ENCODE measurements at regions of chr2 and their contacts with region 1.

Region 1: DNA sequence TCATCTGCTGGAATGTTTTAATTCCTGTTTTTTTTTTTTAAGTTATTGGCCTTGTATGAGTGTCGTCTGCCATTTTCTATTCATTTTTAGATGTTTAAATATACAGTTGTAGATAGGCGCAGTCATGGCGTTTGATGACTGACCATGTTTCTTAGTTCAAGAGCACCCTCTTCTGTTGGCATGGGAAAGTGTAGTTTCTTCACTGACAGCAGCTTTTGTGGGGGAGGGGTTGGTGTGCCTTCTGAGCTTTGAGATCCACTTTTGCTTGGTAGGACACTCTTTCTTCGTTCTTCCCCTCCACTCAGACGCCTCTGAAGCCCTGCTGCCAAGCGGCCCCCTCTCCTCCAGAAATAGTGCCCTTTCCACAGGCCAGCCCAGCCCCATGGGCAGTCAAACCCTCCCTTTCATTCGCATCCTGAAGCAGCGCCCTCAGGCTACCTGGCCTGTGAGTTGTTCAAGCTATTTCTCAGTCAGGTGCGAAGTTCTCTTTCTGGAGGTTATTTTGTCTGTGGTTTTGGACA is 492.0 kb downstream of the TNS1 start:
- DNase-seq: peak; percentile 79
- H3K4me3 Mint-ChIP-seq: no peak overlapping the region
- H3K27ac Mint-ChIP-seq: peak overlapping the region; percentile 52
- H3K4me1 Mint-ChIP-seq: no peaks in the 10 kb centered on the region
- H3K27me3 Mint-ChIP-seq: no peaks in the 10 kb centered on the region
- CTCF ChIP-seq: peak; percentile 80

Region 2: DNA sequence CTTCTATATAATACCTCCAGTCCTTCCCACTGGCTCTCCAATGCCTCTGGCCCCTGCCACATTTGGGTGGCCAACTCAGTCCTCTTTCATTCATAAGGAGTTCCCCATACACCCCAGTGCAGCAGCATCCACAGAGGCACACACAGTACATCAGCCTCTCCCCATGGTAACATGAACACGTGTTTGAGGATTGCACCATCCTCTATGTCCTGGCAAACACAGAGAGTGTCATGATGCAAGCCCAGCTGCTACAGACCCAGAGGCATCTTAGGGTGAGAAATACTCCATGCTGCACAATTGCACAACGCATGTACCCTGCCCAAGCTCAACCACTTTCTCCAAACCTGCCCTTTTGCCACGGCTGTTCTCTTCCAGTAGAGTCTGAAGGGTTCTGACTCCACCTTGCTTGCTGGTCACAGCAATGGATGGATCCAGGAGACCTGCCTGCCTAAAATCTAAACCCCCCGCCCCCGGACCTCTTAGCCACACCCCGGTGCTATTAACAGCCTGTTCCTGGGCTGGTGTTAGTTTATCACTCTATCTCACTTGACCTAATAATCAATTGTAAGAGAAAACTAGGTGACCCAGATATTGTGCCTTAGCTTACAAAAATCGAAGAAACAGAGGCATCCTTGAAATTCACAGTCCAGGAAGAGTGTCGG is 826.9 kb before region 1 on chr2:
- CTCF ChIA-PET with region 1: interaction called, 24 read pairs
- POLR2A ChIA-PET with region 1: interaction called, 3 read pairs
- intact Hi-C with region 1: loop called (anchors 1 kb)
- DNase-seq: peak; percentile 99
- H3K4me3 Mint-ChIP-seq: no peak overlapping the region
- H3K27ac Mint-ChIP-seq: peak overlapping the region; percentile 93
- H3K4me1 Mint-ChIP-seq: peaks cover 32% of the 10 kb centered on the region
- H3K27me3 Mint-ChIP-seq: no peaks in the 10 kb centered on the region
- CTCF ChIP-seq: no peak

Region 3: DNA sequence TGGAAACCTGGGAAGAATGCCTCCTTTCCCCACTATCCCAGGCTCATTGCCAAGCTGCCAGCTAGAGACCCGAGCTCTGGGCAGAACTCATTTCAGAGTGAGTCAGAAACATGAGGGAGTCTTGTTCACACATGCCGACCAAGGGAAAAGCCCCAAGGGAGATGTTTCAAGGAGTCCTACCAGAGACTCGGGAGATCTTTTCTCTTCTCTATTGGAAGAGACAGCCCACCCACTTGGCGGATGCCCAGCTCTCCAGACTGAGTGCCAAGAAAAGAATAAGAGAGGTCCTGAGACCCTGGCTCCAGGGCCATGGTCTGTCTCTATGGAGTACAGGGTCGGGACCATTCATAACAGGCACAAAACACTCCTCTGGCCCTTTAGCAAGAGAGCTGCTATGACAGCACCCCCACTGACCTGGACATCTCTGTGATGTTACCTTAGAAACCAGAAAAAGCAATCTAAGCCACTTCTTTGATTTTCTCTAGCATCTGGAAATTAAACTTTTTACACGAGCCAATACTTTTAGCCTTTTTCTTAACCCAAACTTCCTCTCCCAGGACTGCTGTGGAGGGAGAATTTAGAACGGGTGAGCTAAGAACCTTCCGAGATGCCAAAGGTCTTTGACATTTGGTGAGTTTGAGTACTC is 797.0 kb before region 1 on chr2:
- CTCF ChIA-PET with region 1: interaction called, 10 read pairs
- POLR2A ChIA-PET with region 1: no interaction called
- intact Hi-C with region 1: no loop called
- DNase-seq: peak; percentile 98
- H3K4me3 Mint-ChIP-seq: no peak overlapping the region
- H3K27ac Mint-ChIP-seq: peak overlapping the region; percentile 55
- H3K4me1 Mint-ChIP-seq: peaks cover 28% of the 10 kb centered on the region
- H3K27me3 Mint-ChIP-seq: no peaks in the 10 kb centered on the region
- CTCF ChIP-seq: no peak

Region 4: GRCh38 chr2:216989340-216990129 is 521.3 kb before region 1 on chr2:
- CTCF ChIA-PET with region 1: no interaction called
- POLR2A ChIA-PET with region 1: no interaction called
- intact Hi-C with region 1: loop called (anchors 10 kb)
- DNase-seq: no peak
- H3K4me3 Mint-ChIP-seq: no peak overlapping the region
- H3K27ac Mint-ChIP-seq: no peak overlapping the region
- H3K4me1 Mint-ChIP-seq: no peaks in the 10 kb centered on the region
- H3K27me3 Mint-ChIP-seq: peaks cover 27% of the 10 kb centered on the region
- CTCF ChIP-seq: no peak

Region 5: GRCh38 chr2:217045700-217046475 is 464.9 kb before region 1 on chr2:
- CTCF ChIA-PET with region 1: no interaction called
- POLR2A ChIA-PET with region 1: no interaction called
- intact Hi-C with region 1: no loop called
- DNase-seq: no peak
- H3K4me3 Mint-ChIP-seq: no peak overlapping the region
- H3K27ac Mint-ChIP-seq: no peak overlapping the region
- H3K4me1 Mint-ChIP-seq: no peaks in the 10 kb centered on the region
- H3K27me3 Mint-ChIP-seq: peaks cover 17% of the 10 kb centered on the region
- CTCF ChIP-seq: no peak

Region 6: DNA sequence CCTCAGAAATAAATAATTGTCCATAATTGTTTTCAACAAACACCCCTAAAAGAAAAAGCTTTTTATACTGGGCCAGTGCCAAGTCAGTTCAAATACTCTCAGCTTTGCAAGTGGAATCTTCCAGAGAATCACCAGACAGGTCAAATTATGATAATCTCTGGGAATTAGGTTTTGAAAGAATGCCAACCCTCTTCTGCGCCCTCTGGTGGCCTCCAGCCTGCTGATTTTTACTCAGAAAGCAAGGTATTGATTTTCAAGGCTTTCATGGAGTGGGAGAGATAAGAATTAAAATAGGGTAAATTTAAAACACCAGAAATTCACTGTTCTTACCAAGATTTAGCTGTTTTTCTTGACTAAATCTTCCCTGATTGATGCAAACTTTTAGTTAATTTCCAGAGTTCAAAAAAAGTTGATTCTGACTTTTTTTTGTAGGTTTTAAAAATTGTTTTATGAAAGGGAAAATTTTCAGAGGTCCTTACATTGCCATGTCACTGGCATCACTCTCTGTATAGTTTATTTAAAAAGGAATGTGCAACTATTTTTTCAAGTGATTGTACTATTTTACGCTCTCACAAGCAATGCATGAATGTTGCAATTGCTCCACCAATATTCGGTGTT is 368.1 kb before region 1 on chr2:
- CTCF ChIA-PET with region 1: interaction called, 23 read pairs
- POLR2A ChIA-PET with region 1: no interaction called
- intact Hi-C with region 1: loop called (anchors 1 kb)
- DNase-seq: peak; percentile 55
- H3K4me3 Mint-ChIP-seq: no peak overlapping the region
- H3K27ac Mint-ChIP-seq: no peak overlapping the region
- H3K4me1 Mint-ChIP-seq: no peaks in the 10 kb centered on the region
- H3K27me3 Mint-ChIP-seq: peaks cover 8% of the 10 kb centered on the region
- CTCF ChIP-seq: peak; percentile 70

Region 7: DNA sequence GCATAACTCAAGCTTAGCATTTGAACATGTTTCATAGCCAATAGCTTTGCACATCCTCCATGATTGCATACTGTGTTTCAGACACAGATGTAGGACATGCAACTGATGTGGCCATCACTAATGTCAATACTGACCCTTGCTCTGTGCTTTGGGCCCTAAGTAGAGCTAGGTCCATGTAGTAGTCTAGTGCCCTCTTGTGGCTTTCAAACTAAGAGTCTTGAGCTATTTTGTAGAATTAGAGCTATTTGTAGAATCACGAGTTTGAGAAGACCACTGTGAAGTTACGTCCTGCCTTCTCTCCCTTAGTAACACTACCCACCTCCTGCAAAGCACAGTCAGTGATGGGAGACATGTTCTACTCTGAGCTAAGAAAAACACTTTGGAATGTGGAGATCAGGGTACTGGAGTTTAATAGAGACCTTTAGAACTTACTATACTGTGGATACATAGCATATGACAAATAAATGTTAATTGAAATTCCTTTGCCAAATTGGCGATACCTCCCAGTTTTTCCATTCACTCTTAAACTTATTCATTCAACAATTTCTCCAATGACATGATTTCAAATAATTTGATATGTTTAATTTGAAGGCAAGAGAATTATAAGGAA is 344.5 kb before region 1 on chr2:
- CTCF ChIA-PET with region 1: interaction called, 5 read pairs
- POLR2A ChIA-PET with region 1: no interaction called
- intact Hi-C with region 1: loop called (anchors 1 kb)
- DNase-seq: peak; percentile 54
- H3K4me3 Mint-ChIP-seq: no peak overlapping the region
- H3K27ac Mint-ChIP-seq: no peak overlapping the region
- H3K4me1 Mint-ChIP-seq: peaks cover 6% of the 10 kb centered on the region
- H3K27me3 Mint-ChIP-seq: no peaks in the 10 kb centered on the region
- CTCF ChIP-seq: peak; percentile 65

Region 8: DNA sequence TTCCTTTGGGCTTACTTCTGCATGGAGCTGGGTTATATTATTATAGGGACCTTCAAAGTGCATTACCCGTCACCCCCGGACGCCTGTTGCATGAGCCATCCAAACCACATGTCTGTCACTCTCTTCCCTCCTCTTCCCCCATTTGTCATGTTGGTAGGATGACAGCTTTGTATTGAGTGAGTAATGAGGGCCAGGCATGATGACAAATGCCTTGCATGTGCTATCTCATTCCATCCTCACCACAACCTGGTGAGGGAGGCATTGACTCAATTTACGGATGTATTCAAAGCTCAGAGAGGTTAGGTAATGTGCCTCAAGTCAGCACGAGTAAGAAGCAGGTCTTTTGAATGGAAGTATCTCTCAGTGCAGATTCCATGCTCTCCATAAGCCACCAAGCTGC is 140.4 kb before region 1 on chr2:
- CTCF ChIA-PET with region 1: interaction called, 5 read pairs
- POLR2A ChIA-PET with region 1: interaction called, 4 read pairs
- intact Hi-C with region 1: loop called (anchors 1 kb)
- DNase-seq: peak; percentile 75
- H3K4me3 Mint-ChIP-seq: no peak overlapping the region
- H3K27ac Mint-ChIP-seq: no peak overlapping the region
- H3K4me1 Mint-ChIP-seq: peaks cover 12% of the 10 kb centered on the region
- H3K27me3 Mint-ChIP-seq: no peaks in the 10 kb centered on the region
- CTCF ChIP-seq: no peak

Region 9: GRCh38 chr2:217471319-217471718 is 39.5 kb before region 1 on chr2:
- CTCF ChIA-PET with region 1: no interaction called
- POLR2A ChIA-PET with region 1: no interaction called
- intact Hi-C with region 1: no loop called
- DNase-seq: no peak
- H3K4me3 Mint-ChIP-seq: no peak overlapping the region
- H3K27ac Mint-ChIP-seq: no peak overlapping the region
- H3K4me1 Mint-ChIP-seq: no peaks in the 10 kb centered on the region
- H3K27me3 Mint-ChIP-seq: peaks cover 7% of the 10 kb centered on the region
- CTCF ChIP-seq: no peak

Region 10: DNA sequence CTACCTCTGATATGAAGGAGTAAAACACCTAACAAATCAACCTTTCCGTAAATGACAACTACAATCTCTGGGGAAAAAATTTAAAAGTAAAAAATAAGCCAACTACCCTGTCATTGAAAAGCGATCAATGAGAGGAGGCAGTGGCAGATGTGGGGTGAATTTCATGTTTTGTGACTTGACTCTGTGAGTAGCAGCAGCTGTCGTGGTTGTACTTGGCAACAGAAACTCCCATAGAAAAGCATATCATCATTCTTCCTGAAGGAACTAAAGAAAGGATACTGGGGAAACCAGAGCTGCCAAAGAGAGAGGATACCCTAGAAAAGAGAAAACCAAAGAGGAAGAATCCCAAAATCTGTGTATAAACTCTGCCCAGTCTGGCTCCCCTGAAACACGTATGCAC is 255.5 kb after region 1 on chr2:
- CTCF ChIA-PET with region 1: no interaction called
- POLR2A ChIA-PET with region 1: no interaction called
- intact Hi-C with region 1: no loop called
- DNase-seq: no peak
- H3K4me3 Mint-ChIP-seq: no peak overlapping the region
- H3K27ac Mint-ChIP-seq: no peak overlapping the region
- H3K4me1 Mint-ChIP-seq: no peaks in the 10 kb centered on the region
- H3K27me3 Mint-ChIP-seq: peaks cover 17% of the 10 kb centered on the region
- CTCF ChIP-seq: no peak

Measured in MCF 10A (cell line).